Activated CD4-positive, alpha-beta T cell treated with anti-CD3 and anti-CD28 coated beads, Interleukin-2, amount 10 ng/mL, durations not matched to agents 24 days and 14 days (primary cell): ENCODE measurements at regions of chr19 and their contacts with region 1.

Region 1: GRCh38 chr19:12838182-12838885 is at the start of gene MAST1:
- DNase-seq: peak; percentile 88
- H3K4me3 Mint-ChIP-seq: peak within 1 kb of the TSS; percentile 74
- H3K27ac Mint-ChIP-seq: peak within 1 kb of the TSS; percentile 30
- H3K4me1 Mint-ChIP-seq: peaks cover 21% of the 10 kb centered on the region
- H3K27me3 Mint-ChIP-seq: peaks cover 69% of the 10 kb centered on the region
- total RNA-seq, gene MAST1: 1.6 and 2.4 TPM in 2 replicates

Region 2: GRCh38 chr19:12777217-12778016 is 60.9 kb before region 1 on chr19:
- intact Hi-C with region 1: loop called (anchors 5 kb)
- DNase-seq: peak; percentile 96
- H3K4me3 Mint-ChIP-seq: peak overlapping the region; percentile 96
- H3K27ac Mint-ChIP-seq: peak overlapping the region; percentile 92
- H3K4me1 Mint-ChIP-seq: peaks cover 37% of the 10 kb centered on the region
- H3K27me3 Mint-ChIP-seq: no peaks in the 10 kb centered on the region

Region 3: GRCh38 chr19:12881172-12881808 is 43.0 kb after region 1 on chr19 and contains the start of gene DNASE2:
- intact Hi-C with region 1: loop called (anchors 2 kb)
- DNase-seq: peak; percentile 98
- H3K4me3 Mint-ChIP-seq: peak within 1 kb of the TSS; percentile 85
- H3K27ac Mint-ChIP-seq: peak within 1 kb of the TSS; percentile 84
- H3K4me1 Mint-ChIP-seq: peaks cover 20% of the 10 kb centered on the region
- H3K27me3 Mint-ChIP-seq: peaks cover 1% of the 10 kb centered on the region
- total RNA-seq, gene DNASE2: 21.5 and 22.0 TPM in 2 replicates

Region 4: DNA sequence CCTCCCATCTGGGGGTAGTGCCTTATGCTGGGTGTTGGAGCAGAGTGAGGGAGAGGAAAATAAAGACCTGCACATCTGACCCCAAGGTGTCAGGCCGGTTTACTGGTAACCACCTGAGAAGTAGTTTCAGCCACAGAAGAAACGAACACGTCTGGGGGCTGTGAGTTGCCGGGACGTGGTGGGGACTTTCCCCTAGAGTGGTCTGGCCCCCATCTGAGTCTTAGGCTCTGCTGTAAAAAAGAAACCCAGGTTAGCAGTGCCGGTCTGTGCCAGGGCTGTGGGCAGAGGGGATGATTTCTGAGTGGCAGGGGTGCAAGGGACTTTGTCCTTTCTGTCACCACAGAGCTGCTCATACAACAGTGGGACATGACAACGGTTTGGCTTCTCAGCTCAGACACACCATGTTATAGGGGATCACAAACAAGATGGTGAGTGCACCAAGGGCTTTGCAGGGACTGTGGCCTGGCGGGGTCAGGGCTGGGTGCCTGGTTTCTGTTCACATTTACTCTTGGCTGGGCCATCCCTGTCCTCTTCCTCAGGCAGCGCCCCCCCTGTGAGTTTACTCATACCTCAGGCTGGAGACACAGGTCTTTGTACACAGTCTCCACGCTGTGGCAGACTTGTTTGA is 61.7 kb after region 1 on chr19:
- intact Hi-C with region 1: no loop called
- DNase-seq: no peak
- H3K4me3 Mint-ChIP-seq: no peak overlapping the region
- H3K27ac Mint-ChIP-seq: no peak overlapping the region
- H3K4me1 Mint-ChIP-seq: no peaks in the 10 kb centered on the region
- H3K27me3 Mint-ChIP-seq: no peaks in the 10 kb centered on the region

Region 5: DNA sequence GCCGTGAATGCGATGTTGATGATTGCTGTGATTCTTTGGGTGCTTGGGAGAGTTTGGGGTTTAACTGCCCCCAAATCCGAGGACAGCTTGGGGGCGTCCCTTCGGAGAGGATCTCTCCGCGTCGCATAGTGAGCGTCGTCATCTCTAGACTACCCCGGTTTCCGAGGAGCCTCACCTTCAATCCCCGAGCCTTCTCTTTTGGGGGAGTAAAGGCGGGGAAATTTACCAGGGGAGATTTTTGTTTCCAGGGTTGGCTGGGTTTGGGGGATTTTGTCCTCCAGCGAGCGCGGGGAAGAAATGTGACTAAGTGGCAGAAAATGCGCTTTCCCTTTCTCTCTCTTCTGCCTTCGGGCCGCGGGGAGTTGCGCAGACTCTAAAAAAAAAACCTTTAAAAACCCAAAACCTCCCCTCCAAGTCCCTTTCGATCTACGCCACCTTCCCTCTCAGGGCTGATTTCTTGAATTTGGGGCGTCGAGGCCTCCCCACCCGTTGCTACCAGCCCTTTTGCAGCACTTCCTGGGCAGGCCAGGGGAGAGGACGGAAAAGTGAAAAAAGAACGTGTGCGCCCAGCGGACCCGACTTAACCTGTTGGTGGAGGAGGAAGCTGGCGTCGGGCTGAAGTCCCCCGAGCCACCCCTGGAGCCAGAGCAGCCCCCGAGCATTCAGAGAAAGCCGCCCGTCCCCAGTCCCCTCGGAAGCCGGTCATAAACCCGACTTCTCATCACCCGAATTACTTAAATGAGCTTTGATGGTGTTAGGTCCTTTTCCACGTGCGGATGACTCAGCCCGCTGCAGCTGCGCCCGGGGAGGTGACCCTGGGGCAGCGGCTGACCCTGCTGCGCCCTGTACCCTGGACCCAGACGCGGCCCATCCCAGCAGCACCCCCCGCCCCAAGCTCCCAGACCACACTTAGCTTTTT is 174.6 kb after region 1 on chr19:
- intact Hi-C with region 1: loop called (anchors 5 kb)
- DNase-seq: peak; percentile 76
- H3K4me3 Mint-ChIP-seq: peak overlapping the region; percentile 76
- H3K27ac Mint-ChIP-seq: peak overlapping the region; percentile 67
- H3K4me1 Mint-ChIP-seq: peaks cover 15% of the 10 kb centered on the region
- H3K27me3 Mint-ChIP-seq: peaks cover 75% of the 10 kb centered on the region

Region 6: DNA sequence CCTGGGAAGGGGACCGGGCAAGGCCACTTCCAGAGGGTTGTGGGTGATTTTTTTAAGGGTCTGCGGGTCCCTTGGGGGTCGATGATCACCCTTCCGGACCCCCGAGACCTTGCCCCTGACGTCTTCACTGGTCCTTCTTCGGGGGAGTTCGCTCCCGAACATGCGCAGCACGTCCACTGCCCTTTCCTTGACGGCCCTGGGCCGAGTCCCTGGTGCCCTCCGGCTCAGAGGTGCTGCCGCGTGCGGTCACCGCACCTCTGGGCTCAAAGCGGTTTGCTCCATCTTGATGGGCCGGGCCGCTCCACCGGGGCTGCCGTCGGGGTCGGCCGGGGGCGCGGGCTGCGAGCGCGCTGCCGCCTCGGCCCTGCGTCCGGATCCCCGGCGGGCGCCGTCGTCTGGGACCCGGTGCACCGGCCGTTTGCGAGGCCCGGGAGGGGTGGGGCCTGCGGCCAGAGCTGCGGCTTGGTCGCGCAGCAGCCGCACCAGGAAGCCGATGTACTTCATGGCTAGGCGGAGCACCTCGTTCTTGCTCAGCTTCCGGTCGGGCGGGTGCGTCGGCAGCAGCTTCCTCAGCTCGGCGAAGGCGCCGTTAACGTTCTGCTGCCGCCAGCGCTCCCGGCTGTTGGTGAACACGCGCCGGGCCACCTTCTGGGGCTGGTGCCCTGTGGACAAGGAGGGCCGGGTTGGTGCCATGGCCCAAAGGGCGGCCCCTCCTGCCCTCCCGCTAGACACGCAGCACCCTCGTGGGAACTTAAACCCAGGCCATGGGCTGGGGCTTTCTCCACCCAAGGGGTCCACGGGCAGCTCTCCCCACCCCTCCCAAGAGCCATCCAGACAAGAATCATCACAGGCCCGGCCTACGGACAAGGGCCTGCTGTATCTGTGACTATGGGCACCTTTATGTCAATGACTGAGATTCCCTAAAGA is 261.0 kb after region 1 on chr19:
- intact Hi-C with region 1: loop called (anchors 5 kb)
- DNase-seq: peak; percentile 94
- H3K4me3 Mint-ChIP-seq: peak overlapping the region; percentile 80
- H3K27ac Mint-ChIP-seq: peak overlapping the region; percentile 92
- H3K4me1 Mint-ChIP-seq: peaks cover 47% of the 10 kb centered on the region
- H3K27me3 Mint-ChIP-seq: peaks cover 24% of the 10 kb centered on the region